ENCODE measurements at regions of chr19 and their contacts with region 1.

Region 1: GRCh38 chr19:28466107-28467045 is 746.6 kb downstream of the UQCRFS1 start:
- DNase-seq: peak; percentile 29 to 35
- ATAC-seq: peak; percentile 43 to 45
- H3K4me3 ChIP-seq: no peak overlapping the region
- H3K27ac ChIP-seq: no peak overlapping the region
- H3K4me1 ChIP-seq: peaks cover 12 to 14% of the 10 kb centered on the region in 2 donors
- H3K27me3 ChIP-seq: no peaks in the 10 kb centered on the region
- CTCF ChIP-seq: peak; percentile 58 to 90 (median 67)
- POLR2A ChIP-seq: no peak

Region 2: GRCh38 chr19:28341810-28342350 is 124.5 kb before region 1 on chr19:
- in situ Hi-C with region 1: no loop called
- intact Hi-C with region 1: no loop called
- DNase-seq: no peak
- ATAC-seq: no peak
- H3K4me3 ChIP-seq: no peak overlapping the region
- H3K27ac ChIP-seq: no peak overlapping the region
- H3K4me1 ChIP-seq: no peaks in the 10 kb centered on the region
- H3K27me3 ChIP-seq: no peaks in the 10 kb centered on the region
- CTCF ChIP-seq: no peak
- POLR2A ChIP-seq: no peak

Region 3: DNA sequence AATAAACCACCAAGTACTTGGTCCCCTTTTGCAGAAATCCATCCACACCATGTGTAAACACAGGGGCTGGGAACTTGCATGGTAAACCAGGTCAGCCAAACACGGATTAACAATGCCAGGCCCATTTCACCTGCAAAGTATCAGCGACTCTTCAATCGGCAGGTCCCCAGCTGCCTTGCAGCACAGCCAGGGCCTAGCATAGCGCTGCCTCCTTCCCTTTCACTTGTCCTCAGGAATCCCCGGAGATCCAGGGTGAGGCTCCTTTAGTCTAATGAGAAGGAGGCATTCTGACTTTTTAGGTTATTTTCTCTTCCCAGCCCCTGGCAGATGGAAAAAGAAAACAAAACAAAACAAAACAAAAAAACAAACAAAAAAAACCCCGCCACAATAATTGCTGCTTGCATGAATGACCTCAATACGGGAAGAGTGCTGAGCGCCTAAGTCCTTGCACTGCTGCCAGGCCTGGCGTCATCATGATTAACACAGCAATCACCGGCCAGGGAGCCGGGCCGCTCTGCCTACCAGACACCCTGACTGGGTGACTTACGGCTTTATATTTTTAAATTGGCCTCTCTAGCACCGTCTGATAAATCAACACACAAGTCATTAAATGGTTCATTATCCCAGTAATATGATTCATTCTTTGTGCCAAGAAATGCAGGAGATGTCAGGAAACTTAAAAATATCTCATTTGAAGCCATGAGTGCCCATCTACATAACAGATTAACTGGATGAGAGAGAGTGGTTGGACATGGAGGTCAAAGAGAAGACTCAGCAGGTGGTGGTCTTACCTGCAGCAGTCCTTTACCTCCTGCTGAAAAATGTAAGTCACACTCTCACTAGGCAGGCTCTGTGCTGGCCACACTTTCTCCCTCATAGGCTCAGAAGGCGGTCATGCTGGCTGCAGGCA is 53.8 kb after region 1 on chr19:
- in situ Hi-C with region 1: no loop called
- intact Hi-C with region 1: no loop called
- DNase-seq: peak; percentile 71 to 86
- ATAC-seq: peak; percentile 77 to 79
- H3K4me3 ChIP-seq: no peak overlapping the region
- H3K27ac ChIP-seq: peak overlapping the region; percentile 66 to 86 (median 79)
- H3K4me1 ChIP-seq: peaks cover 7 to 71% of the 10 kb centered on the region in 2 donors
- H3K27me3 ChIP-seq: no peaks in the 10 kb centered on the region
- CTCF ChIP-seq: no peak
- POLR2A ChIP-seq: no peak

Region 4: DNA sequence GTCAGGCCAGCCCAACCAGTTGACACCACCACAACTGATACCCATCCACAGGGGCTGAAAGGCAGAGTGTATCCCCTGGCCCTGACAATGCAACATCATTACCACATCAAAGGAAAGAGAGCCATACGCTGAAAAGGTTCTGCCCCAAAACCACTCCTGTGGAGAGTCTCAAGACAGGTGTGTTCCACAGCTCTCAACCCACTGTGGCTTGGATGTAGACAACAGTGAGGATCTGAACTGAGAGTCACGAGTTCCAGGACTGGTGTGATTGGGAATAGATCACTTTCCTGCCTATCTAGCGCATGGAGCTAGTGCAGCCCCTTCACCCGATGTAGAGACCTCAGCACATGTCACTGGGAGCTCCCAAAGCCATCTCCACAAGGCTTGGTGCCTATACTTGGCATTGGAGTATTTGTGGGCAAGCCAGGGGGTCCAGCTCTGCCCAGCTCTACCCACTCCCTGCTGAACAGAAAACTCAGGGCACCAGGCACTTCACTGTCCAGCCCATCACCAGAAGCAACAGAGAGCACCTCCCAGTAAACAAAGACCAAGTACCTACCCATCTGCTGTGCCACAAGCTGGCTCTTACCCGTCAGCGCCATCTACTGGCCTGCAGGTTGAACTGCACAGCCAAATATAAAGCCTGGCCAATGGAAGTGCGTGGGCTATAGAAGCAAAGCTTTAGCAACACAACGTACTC is 167.1 kb after region 1 on chr19:
- in situ Hi-C with region 1: loop called (anchors 5 kb)
- intact Hi-C with region 1: loop called (anchors 1 kb)
- DNase-seq: peak in 1 of 2 donors; percentile 48
- ATAC-seq: peak; percentile 72 to 78
- H3K4me3 ChIP-seq: no peak overlapping the region
- H3K27ac ChIP-seq: no peak overlapping the region
- H3K4me1 ChIP-seq: no peaks in the 10 kb centered on the region
- H3K27me3 ChIP-seq: no peaks in the 10 kb centered on the region
- CTCF ChIP-seq: peak; percentile 77 to 86 (median 83)
- POLR2A ChIP-seq: no peak

Region 5: DNA sequence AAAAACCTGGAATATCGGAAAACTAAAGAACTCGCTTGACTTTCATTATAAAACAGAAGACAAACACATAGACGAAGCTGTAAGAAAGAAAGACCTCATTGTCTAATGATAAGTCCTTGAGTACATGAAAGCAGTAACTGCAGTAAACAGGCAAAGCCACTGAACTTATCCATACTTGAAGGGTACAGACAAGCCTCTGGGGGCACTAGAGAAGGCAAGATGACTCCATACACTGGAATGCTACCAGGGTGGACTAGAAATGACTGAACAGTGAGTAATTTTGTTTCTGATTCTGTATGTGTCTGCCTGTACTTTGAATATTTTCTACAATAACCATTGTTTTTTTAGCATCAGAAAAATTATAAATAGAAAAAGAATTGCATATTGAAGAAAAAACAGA is 238.6 kb after region 1 on chr19:
- in situ Hi-C with region 1: loop called in 2 of 4 experiments (anchors 5 to 10 kb)
- intact Hi-C with region 1: loop called (anchors 5 kb)
- DNase-seq: no peak
- ATAC-seq: no peak
- H3K4me3 ChIP-seq: no peak overlapping the region
- H3K27ac ChIP-seq: no peak overlapping the region
- H3K4me1 ChIP-seq: no peaks in the 10 kb centered on the region
- H3K27me3 ChIP-seq: no peaks in the 10 kb centered on the region
- CTCF ChIP-seq: no peak
- POLR2A ChIP-seq: no peak

Region 6: DNA sequence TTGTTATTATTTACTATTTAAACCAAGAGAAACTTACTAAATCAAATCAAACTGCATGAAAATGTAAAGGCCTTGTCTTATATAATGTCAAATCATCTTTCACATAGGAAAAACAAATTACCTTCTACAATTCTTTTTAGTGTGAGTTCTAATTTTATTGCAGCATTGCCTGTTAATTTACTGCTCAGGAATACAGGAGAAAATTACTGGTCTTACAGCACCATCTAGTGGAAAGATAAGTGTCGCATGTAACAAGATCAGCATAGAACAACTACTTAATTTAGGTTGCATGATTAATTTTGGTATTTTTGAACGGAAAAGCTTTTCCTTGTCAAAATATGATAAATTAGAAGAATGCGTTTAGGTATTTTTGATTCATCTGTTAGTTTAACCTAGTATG is 243.9 kb after region 1 on chr19:
- in situ Hi-C with region 1: loop called in 2 of 4 experiments (anchors 5 to 10 kb)
- intact Hi-C with region 1: loop called (anchors 5 kb)
- DNase-seq: no peak
- ATAC-seq: no peak
- H3K4me3 ChIP-seq: no peak overlapping the region
- H3K27ac ChIP-seq: no peak overlapping the region
- H3K4me1 ChIP-seq: no peaks in the 10 kb centered on the region
- H3K27me3 ChIP-seq: no peaks in the 10 kb centered on the region
- CTCF ChIP-seq: peak; percentile 45 to 75 (median 65)
- POLR2A ChIP-seq: no peak

Region 7: GRCh38 chr19:28878862-28879566 is 412.6 kb after region 1 on chr19:
- in situ Hi-C with region 1: loop called in 1 of 4 experiments (anchors 25 kb)
- intact Hi-C with region 1: loop called (anchors 5 kb)
- DNase-seq: peak; percentile 19 to 32
- ATAC-seq: peak; percentile 56 to 61
- H3K4me3 ChIP-seq: no peak overlapping the region
- H3K27ac ChIP-seq: no peak overlapping the region
- H3K4me1 ChIP-seq: peaks cover 0 to 3% of the 10 kb centered on the region in 2 donors
- H3K27me3 ChIP-seq: no peaks in the 10 kb centered on the region
- CTCF ChIP-seq: peak; percentile 18 to 68 (median 60)
- POLR2A ChIP-seq: no peak